Right ventricle myocardium inferior (tissue), 1 donor: ENCODE measurements at regions of chr7 and their contacts with region 1.

Region 1: DNA sequence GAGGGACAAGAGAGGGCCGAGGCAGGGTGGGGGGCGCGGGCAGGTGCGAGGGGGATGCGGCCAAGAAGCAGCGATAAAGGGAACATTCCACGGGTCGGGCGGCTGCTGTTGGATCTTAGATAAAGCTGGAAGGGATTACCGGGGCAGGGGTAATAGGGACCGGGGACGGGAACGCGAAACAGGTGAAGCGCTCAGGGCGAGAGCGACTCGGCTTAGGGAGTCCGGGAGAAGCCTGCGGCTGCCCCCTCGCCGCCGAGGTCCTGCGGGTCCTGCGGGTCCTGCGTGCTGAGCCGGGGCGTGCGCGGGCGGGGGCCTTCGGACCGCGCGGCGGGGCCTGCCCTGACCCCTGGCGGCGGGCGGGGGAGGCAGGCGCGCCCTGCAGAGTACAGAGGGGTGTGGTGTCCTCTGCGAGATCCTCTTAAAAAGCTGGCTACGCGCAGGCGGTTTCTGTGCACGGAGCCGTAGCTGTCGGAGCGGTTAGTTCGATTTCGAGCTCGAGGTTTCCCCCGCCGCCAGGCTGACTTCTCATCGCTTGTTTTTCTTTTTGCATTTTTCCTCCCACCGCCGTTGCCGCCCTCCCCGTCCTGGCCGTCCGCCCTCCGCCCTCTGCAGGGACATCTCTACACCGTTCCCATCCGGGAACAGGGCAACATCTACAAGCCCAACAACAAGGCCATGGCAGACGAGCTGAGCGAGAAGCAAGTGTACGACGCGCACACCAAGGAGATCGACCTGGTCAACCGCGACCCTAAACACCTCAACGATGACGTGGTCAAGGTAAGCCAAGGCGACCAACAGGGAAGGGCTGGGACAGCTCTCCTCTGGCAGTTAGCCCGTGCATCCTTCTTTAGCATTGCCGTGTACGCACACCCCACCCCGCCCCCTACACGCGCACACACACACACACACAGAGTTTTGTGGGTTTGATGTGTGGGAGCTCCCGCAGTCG is 1.4 kb downstream of the CAV1 start:
- DNase-seq: peak; percentile 89
- ATAC-seq: peak; percentile 90

Region 2: GRCh38 chr7:116271963-116272839 is 254.0 kb before region 1 on chr7:
- intact Hi-C with region 1: loop called (anchors 2 kb)
- DNase-seq: no peak
- ATAC-seq: peak; percentile 90

Region 3: DNA sequence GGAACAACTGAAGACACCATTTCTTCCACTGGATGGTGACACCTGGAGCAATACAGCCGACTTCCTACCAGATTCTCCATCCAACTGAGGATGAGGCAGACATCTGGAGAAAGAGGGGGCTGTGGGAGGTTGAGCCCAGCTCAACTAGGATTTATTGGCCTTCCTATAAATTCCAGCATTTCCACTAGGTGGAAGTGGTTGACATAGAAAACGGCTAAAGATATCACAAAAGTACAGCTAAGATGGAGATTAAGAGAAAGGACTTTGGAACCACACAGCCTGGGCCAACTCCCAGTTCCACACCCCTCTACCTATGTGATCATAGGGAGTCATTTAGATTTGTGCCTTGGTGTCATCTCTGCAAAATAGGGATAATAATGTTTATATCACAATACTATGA is 87.9 kb before region 1 on chr7:
- intact Hi-C with region 1: loop called (anchors 2 kb)
- DNase-seq: no peak
- ATAC-seq: no peak

Region 4: DNA sequence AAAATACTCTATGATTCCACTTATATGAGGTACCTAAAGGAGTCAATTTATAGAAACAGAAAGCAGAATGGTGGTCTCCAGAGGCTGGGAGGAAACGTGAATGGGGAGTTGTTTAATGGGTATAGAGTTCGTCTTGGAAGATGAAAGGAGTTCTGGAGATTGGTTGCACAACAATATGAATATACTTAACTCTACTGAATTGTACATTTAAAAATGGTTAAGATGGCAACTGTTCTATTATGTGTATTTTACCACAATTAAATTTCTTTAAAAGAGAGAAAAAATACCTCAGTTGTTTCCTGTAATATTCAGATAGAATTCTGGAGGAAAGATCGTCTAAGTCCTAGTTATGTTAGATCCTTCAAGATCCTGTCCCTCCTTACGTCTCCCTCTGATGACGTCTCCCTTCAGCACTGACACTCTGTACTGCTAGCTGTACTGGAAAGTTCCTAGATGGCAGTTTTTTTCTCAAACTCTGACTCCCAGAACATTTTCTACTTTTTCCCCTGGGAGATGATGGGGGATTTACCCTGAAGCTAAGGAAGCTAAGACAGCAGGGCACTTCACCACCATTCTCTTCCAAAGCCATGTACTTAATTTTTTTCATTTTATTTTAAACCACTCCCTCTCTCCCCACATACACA is 79.9 kb before region 1 on chr7:
- intact Hi-C with region 1: loop called (anchors 2 kb)
- DNase-seq: no peak
- ATAC-seq: no peak

Region 5: GRCh38 chr7:116499168-116500077 is 26.8 kb before region 1 on chr7 and contains the start of gene CAV2:
- intact Hi-C with region 1: loop called (anchors 1 kb)
- DNase-seq: peak; percentile 83
- ATAC-seq: peak; percentile 93
- total RNA-seq, gene CAV2: 239 TPM

Region 6: GRCh38 chr7:116511552-116512519 is 14.4 kb before region 1 on chr7:
- intact Hi-C with region 1: loop called (anchors 1 kb)
- DNase-seq: no peak
- ATAC-seq: peak; percentile 93

Region 7: GRCh38 chr7:116736927-116737715 is 210.9 kb after region 1 on chr7:
- intact Hi-C with region 1: no loop called
- DNase-seq: no peak
- ATAC-seq: no peak